Right ventricle myocardium superior (tissue), 1 donor: ENCODE measurements at regions of chr15 and their contacts with region 1.

Region 1: DNA sequence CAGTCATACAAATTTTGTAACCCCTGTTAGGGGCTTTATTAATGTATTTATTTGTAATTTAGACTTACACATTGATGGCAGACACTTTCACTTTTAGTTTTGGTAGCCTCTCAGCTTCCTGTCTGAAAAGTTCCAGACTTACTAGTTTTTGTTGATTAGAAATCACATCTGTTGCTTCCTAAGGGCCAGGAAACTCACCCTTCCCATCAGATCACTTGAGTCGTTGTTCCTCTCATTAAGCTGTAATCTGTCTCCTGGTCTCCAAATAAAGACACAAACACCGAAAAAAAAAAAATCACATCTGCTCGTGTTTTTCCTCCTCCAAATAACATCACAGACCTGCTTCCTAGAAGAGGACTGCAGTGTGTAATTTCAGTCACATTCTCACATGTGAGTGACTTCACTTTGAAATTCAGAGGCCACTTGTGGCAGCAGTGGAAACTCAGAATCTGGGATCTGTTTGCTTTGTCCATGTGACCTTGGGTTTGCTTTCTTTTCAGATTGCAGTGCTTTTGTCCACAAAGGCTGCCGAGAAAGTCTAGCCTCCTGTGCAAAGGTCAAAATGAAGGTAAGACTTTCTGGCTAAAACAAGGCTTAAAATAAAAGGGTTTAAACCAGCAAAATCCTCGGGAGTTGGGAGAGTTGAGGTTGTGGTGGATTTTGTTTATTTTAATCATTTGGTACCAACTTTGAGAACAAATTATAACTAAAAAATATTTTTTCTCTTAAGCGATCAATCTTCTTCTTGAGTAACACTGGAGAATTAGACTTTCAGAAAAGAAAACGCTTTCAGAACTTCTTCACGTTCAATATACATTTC is 87.0 kb downstream of the KLHL25 start:
- DNase-seq: no peak
- ATAC-seq: peak; percentile 39

Region 2: GRCh38 chr15:85494048-85494793 is 213.5 kb before region 1 on chr15:
- intact Hi-C with region 1: loop called (anchors 10 kb)
- DNase-seq: no peak
- ATAC-seq: peak; percentile 66

Region 3: GRCh38 chr15:85543741-85544155 is 164.0 kb before region 1 on chr15:
- intact Hi-C with region 1: no loop called
- DNase-seq: peak; percentile 86
- ATAC-seq: peak; percentile 58

Region 4: GRCh38 chr15:85941186-85941861 is 233.6 kb after region 1 on chr15:
- intact Hi-C with region 1: no loop called
- DNase-seq: no peak
- ATAC-seq: no peak